K562 (cell line): ENCODE measurements at regions of chr15 and their contacts with region 1.

Region 1: GRCh38 chr15:92903941-92904831 is 4.1 kb downstream of the CHD2 start:
- DNase-seq: peak; percentile 95 to 99 (median 96)
- ATAC-seq: peak; percentile 82
- H3K4me3 ChIP-seq: peak overlapping the region; percentile 76
- H3K27ac ChIP-seq: peak overlapping the region; percentile 99
- H3K4me1 ChIP-seq: peaks cover 0 to 23% of the 10 kb centered on the region in 2 experiments; a peak in 3 of 5 replicates
- H3K27me3 ChIP-seq: no peaks in the 10 kb centered on the region
- CTCF ChIP-seq: no peak; a peak in 2 of 6 replicates
- EP300 ChIP-seq: peak; percentile 45; the same call in 1 of the 2 replicates
- POLR2A ChIP-seq: peak; percentile 93
- RAD21 ChIP-seq: peak in 1 of 2 experiments; percentile 10; a peak in 3 of 4 replicates

Region 2: GRCh38 chr15:92797168-92797951 is 106.8 kb before region 1 on chr15:
- CTCF ChIA-PET with region 1: no interaction called
- POLR2A ChIA-PET with region 1: interaction called, 10 read pairs
- in situ Hi-C with region 1: no loop called
- intact Hi-C with region 1: no loop called
- DNase-seq: peak; percentile 52 to 84 (median 57)
- ATAC-seq: peak; percentile 74
- H3K4me3 ChIP-seq: no peak overlapping the region
- H3K27ac ChIP-seq: peak overlapping the region; percentile 28; the same call in 2 of the 3 replicates
- H3K4me1 ChIP-seq: peaks cover 18 to 23% of the 10 kb centered on the region in 2 experiments
- H3K27me3 ChIP-seq: no peaks in the 10 kb centered on the region
- CTCF ChIP-seq: peak; percentile 40 to 80 (median 65); a peak in 4 of 6 replicates
- EP300 ChIP-seq: no peak
- POLR2A ChIP-seq: no peak
- RAD21 ChIP-seq: peak; percentile 80 to 91

Region 3: GRCh38 chr15:92808978-92809879 is 95.0 kb before region 1 on chr15:
- CTCF ChIA-PET with region 1: interaction called, 3 read pairs
- POLR2A ChIA-PET with region 1: interaction called, 109 read pairs
- in situ Hi-C with region 1: no loop called
- intact Hi-C with region 1: loop called (anchors 1 kb)
- DNase-seq: peak; percentile 95 to 98 (median 95)
- ATAC-seq: peak; percentile 83
- H3K4me3 ChIP-seq: peak overlapping the region; percentile 39
- H3K27ac ChIP-seq: peak overlapping the region; percentile 92
- H3K4me1 ChIP-seq: peaks cover 19 to 38% of the 10 kb centered on the region in 2 experiments
- H3K27me3 ChIP-seq: no peaks in the 10 kb centered on the region
- CTCF ChIP-seq: peak; percentile 91 to 97 (median 96)
- EP300 ChIP-seq: peak; percentile 72
- POLR2A ChIP-seq: peak; percentile 87
- RAD21 ChIP-seq: peak; percentile 94 to 96

Region 4: DNA sequence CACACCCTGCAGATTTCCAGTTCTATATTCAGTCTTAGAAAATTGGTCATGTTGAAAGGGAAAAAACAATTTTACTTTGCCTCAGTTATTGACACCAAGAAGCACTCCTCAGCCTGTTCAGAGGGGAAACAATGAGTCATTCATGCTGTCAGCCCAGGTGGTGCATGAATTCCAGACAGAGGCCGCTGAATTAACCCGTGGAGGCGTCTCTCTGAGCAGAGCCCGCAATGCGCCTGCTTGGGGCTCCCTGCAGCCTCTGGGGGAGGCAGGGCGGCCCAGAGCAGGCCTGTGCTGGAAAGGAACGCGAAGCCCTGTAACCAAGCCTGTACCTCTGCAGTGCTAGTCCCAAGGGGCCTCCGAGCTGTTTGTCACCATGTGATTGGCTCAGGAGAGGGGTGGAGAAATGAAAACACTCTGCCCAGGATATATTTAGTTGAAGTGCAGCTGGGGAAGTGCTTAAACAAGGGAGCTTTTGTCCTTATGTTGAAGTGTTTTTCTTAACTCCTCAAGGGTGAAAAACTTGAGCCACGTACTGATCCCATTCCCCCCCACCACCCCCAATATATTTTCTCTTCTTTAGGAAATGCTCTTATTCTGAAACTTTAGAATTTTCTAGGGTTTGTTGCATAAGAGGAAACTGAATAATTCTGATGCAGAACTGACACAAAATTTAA is 72.4 kb before region 1 on chr15:
- CTCF ChIA-PET with region 1: no interaction called
- POLR2A ChIA-PET with region 1: interaction called, 11 read pairs
- in situ Hi-C with region 1: no loop called
- intact Hi-C with region 1: no loop called
- DNase-seq: peak; percentile 72 to 95 (median 83)
- ATAC-seq: peak; percentile 99
- H3K4me3 ChIP-seq: peak overlapping the region; percentile 2; the same call in 1 of the 2 replicates
- H3K27ac ChIP-seq: peak overlapping the region; percentile 85
- H3K4me1 ChIP-seq: peaks cover 15 to 22% of the 10 kb centered on the region in 2 experiments
- H3K27me3 ChIP-seq: no peaks in the 10 kb centered on the region
- CTCF ChIP-seq: 0 out of 6 replicates have a peak, but pooled peaks of 1 of the 3 experiments have one; percentile 23
- EP300 ChIP-seq: 0 out of 2 replicates have a peak, but pooled peaks have one; percentile 19
- POLR2A ChIP-seq: peak; percentile 75
- RAD21 ChIP-seq: peak in 1 of 2 experiments; percentile 38; a peak in 3 of 4 replicates

Region 5: DNA sequence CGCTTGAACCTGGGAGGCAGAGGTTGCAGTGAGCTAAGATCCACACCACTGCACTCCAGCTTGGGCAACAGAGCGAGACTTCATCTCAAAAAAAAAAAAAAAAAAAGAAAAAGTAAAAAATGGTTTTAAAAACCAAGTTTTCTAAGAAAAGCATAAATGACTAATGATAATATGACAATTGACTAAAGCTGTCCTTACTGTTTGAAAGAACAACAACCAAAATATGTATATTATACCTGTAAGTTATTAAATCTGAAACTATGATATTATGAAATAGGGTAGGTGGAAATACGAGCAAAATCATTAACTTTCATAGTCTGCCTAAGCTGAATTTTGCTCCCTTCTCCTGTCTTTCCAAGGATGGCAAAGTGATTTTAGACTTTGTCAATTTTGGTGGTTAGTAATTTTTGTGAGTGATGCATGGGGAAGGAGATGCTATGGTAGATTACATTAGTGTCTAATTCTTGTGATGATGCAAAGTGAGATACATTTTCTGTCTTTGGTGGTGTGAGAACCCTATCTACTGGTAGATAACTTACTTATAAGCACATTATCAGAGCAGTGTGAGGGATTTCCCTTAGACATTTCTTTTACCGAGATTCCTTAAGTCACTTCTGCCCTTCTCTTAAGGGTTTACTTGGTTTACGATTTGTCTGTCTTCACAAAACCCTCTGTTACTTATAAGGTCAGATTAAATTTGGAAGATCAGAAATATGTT is 14.6 kb before region 1 on chr15:
- CTCF ChIA-PET with region 1: no interaction called
- POLR2A ChIA-PET with region 1: interaction called, 69 read pairs
- in situ Hi-C with region 1: no loop called
- intact Hi-C with region 1: no loop called
- DNase-seq: no peak
- ATAC-seq: no peak
- H3K4me3 ChIP-seq: no peak overlapping the region
- H3K27ac ChIP-seq: peak overlapping the region; percentile 1; the same call in 1 of the 3 replicates
- H3K4me1 ChIP-seq: no peaks in the 10 kb centered on the region
- H3K27me3 ChIP-seq: no peaks in the 10 kb centered on the region
- CTCF ChIP-seq: no peak
- EP300 ChIP-seq: no peak
- POLR2A ChIP-seq: peak; percentile 39; the same call in 1 of the 2 replicates
- RAD21 ChIP-seq: no peak

Region 6: DNA sequence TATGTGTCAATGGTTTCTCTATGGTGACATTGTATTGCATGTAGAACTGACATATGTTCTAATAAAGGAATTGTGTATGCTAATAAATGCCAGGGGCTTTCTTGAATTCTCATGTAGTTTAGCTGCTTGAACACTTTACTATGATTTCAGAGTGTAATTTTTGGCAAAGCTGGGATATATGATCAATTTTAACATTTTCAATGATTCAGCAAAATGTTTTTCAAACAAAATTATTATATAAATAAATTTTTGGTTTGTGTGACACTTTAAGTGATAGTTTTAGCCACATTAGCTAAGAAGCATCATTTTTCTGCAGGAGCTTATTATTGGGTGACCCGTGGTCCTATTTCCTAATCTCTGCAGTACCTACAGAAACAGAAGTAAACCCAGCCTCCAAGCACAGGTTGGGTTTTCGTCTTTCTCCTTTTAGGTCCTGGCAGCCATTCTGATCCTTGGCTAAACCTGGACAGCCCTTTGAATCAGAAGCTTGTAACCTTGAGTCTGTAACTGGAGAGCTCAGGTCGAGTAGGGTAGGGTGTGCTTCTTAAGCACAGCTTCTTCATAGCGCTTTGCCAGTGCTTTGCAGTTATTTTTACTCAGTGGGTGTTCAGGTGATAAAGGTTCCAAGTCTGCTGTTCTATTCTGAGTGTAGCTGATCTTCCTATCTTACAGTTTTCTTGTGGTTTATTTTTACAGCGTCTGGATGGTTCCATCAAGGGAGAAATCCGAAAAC is 70.2 kb after region 1 on chr15:
- CTCF ChIA-PET with region 1: no interaction called
- POLR2A ChIA-PET with region 1: no interaction called
- in situ Hi-C with region 1: no loop called
- intact Hi-C with region 1: no loop called
- DNase-seq: no peak
- ATAC-seq: no peak
- H3K4me3 ChIP-seq: no peak overlapping the region
- H3K27ac ChIP-seq: no peak overlapping the region
- H3K4me1 ChIP-seq: no peaks in the 10 kb centered on the region
- H3K27me3 ChIP-seq: no peaks in the 10 kb centered on the region
- CTCF ChIP-seq: no peak
- EP300 ChIP-seq: no peak
- POLR2A ChIP-seq: no peak
- RAD21 ChIP-seq: no peak